ENCODE measurements at regions of chr10 and their contacts with region 1.

Region 1: GRCh38 chr10:110535958-110536891 is 31.3 kb upstream of the SMC3 start:
- DNase-seq: peak; percentile 49
- ATAC-seq: peak; percentile 83
- H3K4me3 Mint-ChIP-seq: peak overlapping the region; percentile 62
- H3K27ac Mint-ChIP-seq: peak overlapping the region; percentile 68
- H3K4me1 Mint-ChIP-seq: peaks cover 31% of the 10 kb centered on the region
- H3K27me3 Mint-ChIP-seq: peaks cover 4% of the 10 kb centered on the region
- CTCF ChIP-seq: no peak

Region 2: GRCh38 chr10:110446954-110447608 is 89.1 kb before region 1 on chr10:
- CTCF ChIA-PET with region 1: no interaction called
- POLR2A ChIA-PET with region 1: interaction called, 11 read pairs
- intact Hi-C with region 1: no loop called
- DNase-seq: no peak
- ATAC-seq: no peak
- H3K4me3 Mint-ChIP-seq: no peak overlapping the region
- H3K27ac Mint-ChIP-seq: no peak overlapping the region
- H3K4me1 Mint-ChIP-seq: peaks cover under 1% of the 10 kb centered on the region
- H3K27me3 Mint-ChIP-seq: no peaks in the 10 kb centered on the region
- CTCF ChIP-seq: no peak

Region 3: GRCh38 chr10:110502851-110503301 is 33.3 kb before region 1 on chr10:
- CTCF ChIA-PET with region 1: interaction called, 6 read pairs
- POLR2A ChIA-PET with region 1: interaction called, 16 read pairs
- intact Hi-C with region 1: loop called (anchors 1 kb)
- DNase-seq: no peak
- ATAC-seq: peak; percentile 53
- H3K4me3 Mint-ChIP-seq: peak overlapping the region; percentile 72
- H3K27ac Mint-ChIP-seq: peak overlapping the region; percentile 90
- H3K4me1 Mint-ChIP-seq: peaks cover 76% of the 10 kb centered on the region
- H3K27me3 Mint-ChIP-seq: no peaks in the 10 kb centered on the region
- CTCF ChIP-seq: no peak

Region 4: DNA sequence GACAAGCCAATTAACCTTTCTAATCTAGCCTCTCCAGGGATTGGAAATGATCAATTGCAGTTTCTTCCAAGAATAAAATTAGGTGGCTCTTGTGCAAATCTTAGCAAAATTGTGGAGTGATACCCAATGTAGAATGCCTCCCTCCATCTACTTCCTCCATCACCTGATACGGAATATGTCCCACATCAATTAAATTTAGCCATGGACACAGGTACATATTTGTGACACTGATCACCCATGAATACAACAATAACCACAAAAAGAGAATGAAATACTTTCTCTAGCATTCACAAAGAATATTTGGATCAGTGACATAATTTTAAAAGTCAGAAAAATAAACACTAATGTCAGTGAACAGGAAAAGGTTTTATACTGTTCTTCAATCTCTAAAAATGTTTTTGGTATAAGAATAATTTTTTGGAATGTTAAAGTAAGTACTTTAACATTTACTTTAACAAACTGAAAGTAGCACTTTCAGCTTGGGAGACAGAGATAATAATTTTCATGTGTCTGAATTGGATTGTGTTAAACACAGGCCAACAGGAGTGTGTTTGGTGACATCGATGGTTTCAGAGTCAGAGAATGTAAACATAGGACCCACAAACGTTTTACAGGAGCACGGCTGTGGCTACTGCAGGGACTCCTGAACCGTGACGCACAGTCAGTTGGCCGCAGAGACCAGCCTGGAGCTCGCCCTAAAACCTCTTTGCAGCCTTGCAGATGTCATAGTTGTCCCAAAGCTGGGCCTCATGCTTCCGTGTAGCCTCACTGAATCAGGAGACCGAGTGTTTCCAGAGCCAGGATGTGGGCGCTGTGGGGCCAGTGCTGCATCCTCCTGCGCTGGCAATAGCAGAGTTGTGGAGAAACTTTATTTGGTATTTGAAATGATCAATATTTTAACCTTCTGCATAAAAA is 115.1 kb after region 1 on chr10:
- CTCF ChIA-PET with region 1: no interaction called
- POLR2A ChIA-PET with region 1: no interaction called
- intact Hi-C with region 1: no loop called
- DNase-seq: no peak
- ATAC-seq: no peak
- H3K4me3 Mint-ChIP-seq: no peak overlapping the region
- H3K27ac Mint-ChIP-seq: no peak overlapping the region
- H3K4me1 Mint-ChIP-seq: peaks cover 29% of the 10 kb centered on the region
- H3K27me3 Mint-ChIP-seq: peaks cover 24% of the 10 kb centered on the region
- CTCF ChIP-seq: no peak

Measured in activated B cell treated with CpG ODN at 0.5 μM for 24 hours (primary cell).